ENCODE measurements at regions of chr3 and their contacts with region 1.

Region 1: GRCh38 chr3:122957707-122958689 is 69.6 kb downstream of the SEMA5B start:
- DNase-seq: peak; percentile 54 to 82 (median 71)
- ATAC-seq: peak; percentile 79 to 83 (median 82)
- H3K4me3 ChIP-seq: peak overlapping the region in 1 of 12 donors; percentile 30
- H3K27ac ChIP-seq: peak overlapping the region; percentile 20 to 95 (median 80)
- H3K4me1 ChIP-seq: peaks cover 0 to 79% (median 40%) of the 10 kb centered on the region in 12 donors
- H3K27me3 ChIP-seq: peaks cover 0 to 4% (median 0%) of the 10 kb centered on the region in 9 donors
- CTCF ChIP-seq: no peak
- POLR2A ChIP-seq: no peak

Region 2: DNA sequence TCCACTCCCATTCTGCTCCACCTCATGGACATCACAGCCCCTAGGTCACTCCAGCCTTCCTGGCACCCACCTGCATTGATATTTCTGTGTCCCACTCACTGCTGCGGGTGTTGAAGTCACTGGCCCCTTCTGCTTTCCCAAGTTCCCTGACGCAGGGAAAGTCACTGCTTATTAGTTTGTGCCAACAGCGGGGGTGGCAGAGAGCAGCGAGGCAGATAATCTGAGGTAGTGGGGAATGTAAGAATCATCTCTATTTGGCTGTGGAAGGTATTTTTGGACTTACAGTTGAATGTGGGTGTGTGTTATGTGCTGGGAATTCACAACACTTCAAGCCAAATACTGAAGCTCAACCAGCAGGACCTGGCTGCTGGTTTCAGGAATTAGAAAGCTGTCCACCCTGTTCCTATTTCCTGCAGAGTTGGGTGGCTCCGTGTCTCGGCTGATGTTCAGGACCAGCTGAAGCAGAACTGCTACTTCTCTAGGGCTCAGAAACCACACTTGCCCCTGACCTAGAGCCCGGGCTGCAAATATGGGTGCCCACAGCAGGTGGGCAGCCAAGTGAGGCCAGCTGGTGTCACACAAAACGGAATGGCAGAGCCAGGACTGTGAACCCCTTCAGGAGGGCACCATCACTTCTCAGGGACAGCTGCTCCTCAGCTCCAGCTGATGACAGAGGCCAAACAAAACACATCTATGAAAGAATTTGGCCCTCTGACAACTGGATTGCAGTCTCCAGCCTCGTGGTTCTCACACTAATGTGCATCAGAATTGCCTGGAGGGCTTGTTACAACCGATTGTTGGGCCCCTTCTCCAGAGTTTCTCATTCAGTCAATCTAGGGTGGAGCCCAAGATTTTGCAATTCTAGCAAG is 11.8 kb after region 1 on chr3:
- intact Hi-C with region 1: loop called in 3 of 10 experiments (anchors 1 to 2 kb)
- DNase-seq: peak in 4 of 5 donors; percentile 42 to 60 (median 54)
- ATAC-seq: peak in 3 of 4 donors; percentile 40 to 55 (median 48)
- H3K4me3 ChIP-seq: peak overlapping the region in 1 of 12 donors; percentile 8
- H3K27ac ChIP-seq: peak overlapping the region; percentile 54 to 97 (median 78)
- H3K4me1 ChIP-seq: peaks cover 0 to 61% (median 38%) of the 10 kb centered on the region in 12 donors
- H3K27me3 ChIP-seq: no peaks in the 10 kb centered on the region
- CTCF ChIP-seq: no peak
- POLR2A ChIP-seq: no peak

Region 3: DNA sequence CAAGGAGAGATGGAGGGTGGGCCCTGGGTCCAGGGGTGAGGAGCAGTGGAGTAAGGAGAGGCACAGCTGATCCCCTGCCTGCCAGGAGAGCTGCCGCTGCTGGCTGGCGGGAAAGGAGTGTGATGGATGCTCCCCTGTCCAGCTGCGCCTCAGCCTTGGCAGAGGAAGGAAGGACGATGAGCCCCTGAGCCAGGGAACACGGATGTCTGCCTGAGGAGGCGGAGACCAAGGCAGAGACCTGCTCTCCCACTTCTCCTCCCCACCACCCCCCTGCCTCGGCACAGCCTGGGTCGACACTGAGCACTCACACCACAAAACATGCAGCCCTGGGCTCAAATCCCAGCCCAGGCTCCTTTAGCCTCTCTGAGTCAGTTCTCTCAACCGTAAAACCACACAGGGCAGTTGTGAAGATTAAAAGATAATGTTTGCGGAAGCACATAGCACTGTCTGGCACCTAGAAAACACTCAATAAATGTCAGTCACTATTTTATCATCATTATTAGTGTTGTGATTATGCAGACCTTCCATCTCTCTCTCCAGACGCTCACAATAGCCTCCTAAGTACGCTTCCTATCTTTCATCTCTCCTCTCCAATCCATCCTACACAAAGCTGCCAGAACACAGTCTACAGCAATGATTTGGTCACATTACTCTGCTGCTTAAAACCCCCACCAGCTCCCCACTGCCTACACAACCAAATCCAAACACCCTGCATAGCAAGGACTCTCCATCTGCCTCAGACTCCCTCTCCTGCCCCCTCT is 17.3 kb after region 1 on chr3:
- intact Hi-C with region 1: loop called in 3 of 10 experiments (anchors 1 to 2 kb)
- DNase-seq: peak in 2 of 5 donors; percentile 1 to 45
- ATAC-seq: peak in 3 of 4 donors; percentile 2 to 16 (median 3)
- H3K4me3 ChIP-seq: no peak overlapping the region
- H3K27ac ChIP-seq: peak overlapping the region; percentile 20 to 98 (median 90)
- H3K4me1 ChIP-seq: peaks cover 0 to 83% (median 55%) of the 10 kb centered on the region in 12 donors
- H3K27me3 ChIP-seq: no peaks in the 10 kb centered on the region
- CTCF ChIP-seq: no peak
- POLR2A ChIP-seq: no peak

Region 4: DNA sequence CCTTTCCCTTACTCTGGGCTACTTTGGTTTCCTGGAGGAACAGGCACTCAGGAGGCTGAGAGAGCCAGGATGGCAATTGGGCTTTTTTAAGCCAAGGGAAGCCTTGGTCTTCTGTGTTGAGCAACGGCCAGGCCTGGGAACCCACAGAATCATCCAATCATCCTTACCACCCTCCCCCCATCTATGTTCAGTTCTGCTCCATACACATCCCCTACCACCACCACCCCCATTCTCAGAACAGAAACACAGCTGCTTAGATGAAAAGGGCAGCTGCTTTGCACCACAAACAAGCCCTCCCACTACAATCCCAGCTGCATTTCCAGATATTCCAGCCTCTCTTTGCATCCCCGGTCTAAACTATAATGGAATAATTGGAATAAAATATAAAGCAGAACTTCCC is 48.6 kb after region 1 on chr3:
- intact Hi-C with region 1: no loop called
- DNase-seq: no peak
- ATAC-seq: no peak
- H3K4me3 ChIP-seq: no peak overlapping the region
- H3K27ac ChIP-seq: no peak overlapping the region
- H3K4me1 ChIP-seq: no peaks in the 10 kb centered on the region
- H3K27me3 ChIP-seq: no peaks in the 10 kb centered on the region
- CTCF ChIP-seq: no peak
- POLR2A ChIP-seq: no peak

Measured in heart left ventricle (tissue), 16 donors.